Breast epithelium (tissue), 4 donors: ENCODE measurements at regions of chr2 and their contacts with region 1.

Region 1: DNA sequence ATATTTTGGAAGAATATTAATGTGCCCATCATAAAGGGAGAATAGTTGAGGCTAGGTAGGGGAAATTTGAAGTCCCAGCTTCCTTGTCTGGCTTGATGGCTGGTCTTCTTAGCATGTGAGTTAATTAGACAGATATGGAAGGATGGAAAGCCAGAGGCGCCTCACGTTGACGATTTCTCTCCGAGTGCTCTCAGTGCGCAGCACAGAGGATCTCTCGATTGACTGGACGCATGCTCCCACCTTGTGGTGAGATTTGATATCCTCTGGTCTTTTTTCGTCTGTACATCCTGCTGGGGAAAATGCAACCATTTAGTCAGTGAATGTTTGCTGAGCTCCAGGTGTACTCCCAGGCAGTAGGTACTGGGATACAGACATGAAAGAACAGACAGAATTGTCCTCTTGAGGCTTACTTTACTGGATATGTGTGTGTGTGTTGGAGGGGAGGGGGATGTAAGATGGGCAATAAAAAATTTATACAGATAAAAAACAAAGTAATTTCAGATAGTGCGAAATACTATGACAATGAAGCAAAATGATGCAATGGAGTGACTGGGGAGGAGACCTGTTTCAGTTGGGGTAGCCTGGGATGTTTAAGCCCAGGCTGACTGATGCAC is 66.9 kb upstream of the ZNG1B start:
- DNase-seq: peak; percentile 57 to 60
- H3K4me3 ChIP-seq: no peak overlapping the region
- H3K27ac ChIP-seq: no peak overlapping the region
- H3K4me1 ChIP-seq: no peaks in the 10 kb centered on the region
- H3K27me3 ChIP-seq: no peaks in the 10 kb centered on the region
- CTCF ChIP-seq: peak; percentile 47 to 84 (median 81)
- POLR2A ChIP-seq: no peak

Region 2: DNA sequence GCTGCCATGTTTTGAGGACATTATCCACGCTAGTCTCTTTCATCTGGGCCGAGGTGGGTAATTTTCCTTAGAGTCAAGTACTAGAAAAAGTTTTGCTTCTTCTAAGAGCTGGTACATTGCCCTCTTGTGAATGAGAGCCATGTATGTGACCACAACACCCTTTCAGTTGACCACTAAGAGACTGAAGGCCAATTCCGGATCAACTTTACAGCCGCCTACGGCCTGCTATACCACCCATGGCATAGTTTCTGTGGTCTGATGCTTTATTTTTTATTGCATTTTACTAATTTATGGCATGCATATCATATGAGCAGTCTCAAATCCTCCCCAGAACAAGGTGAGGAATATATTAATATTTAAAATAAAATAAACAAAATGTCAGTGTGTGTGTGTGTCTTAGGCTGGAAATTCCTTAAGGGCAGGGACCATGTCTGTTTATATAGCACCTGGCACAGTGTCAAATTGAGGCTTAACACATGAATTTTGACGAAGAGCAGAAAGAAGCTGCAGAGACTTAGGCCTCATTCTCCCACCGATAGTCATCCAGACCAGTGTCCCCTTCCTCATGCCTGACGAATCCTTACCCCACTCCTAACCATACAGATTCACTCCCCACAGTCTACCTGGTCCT is 161.5 kb before region 1 on chr2:
- intact Hi-C with region 1: loop called (anchors 5 kb)
- DNase-seq: no peak
- H3K4me3 ChIP-seq: no peak overlapping the region
- H3K27ac ChIP-seq: no peak overlapping the region
- H3K4me1 ChIP-seq: no peaks in the 10 kb centered on the region
- H3K27me3 ChIP-seq: no peaks in the 10 kb centered on the region
- CTCF ChIP-seq: no peak
- POLR2A ChIP-seq: no peak

Region 3: GRCh38 chr2:113248997-113249770 is 121.4 kb before region 1 on chr2:
- intact Hi-C with region 1: loop called (anchors 10 kb)
- DNase-seq: peak; percentile 74 to 77
- H3K4me3 ChIP-seq: no peak overlapping the region
- H3K27ac ChIP-seq: no peak overlapping the region
- H3K4me1 ChIP-seq: no peaks in the 10 kb centered on the region
- H3K27me3 ChIP-seq: no peaks in the 10 kb centered on the region
- CTCF ChIP-seq: peak; percentile 84 to 91 (median 90)
- POLR2A ChIP-seq: no peak